Activated T-helper 2 cell treated with anti-CD3 and anti-CD28 coated beads, Interferon-gamma antibody, Interleukin-2, Interleukin-4, amounts not matched to agents 10 μg/mL and 5 μg/mL and 100 μg/mL, durations not matched to agents 14 hours and 24 hours and 36 hours (primary cell): ENCODE measurements at regions of chr4 and their contacts with region 1.

Region 1: DNA sequence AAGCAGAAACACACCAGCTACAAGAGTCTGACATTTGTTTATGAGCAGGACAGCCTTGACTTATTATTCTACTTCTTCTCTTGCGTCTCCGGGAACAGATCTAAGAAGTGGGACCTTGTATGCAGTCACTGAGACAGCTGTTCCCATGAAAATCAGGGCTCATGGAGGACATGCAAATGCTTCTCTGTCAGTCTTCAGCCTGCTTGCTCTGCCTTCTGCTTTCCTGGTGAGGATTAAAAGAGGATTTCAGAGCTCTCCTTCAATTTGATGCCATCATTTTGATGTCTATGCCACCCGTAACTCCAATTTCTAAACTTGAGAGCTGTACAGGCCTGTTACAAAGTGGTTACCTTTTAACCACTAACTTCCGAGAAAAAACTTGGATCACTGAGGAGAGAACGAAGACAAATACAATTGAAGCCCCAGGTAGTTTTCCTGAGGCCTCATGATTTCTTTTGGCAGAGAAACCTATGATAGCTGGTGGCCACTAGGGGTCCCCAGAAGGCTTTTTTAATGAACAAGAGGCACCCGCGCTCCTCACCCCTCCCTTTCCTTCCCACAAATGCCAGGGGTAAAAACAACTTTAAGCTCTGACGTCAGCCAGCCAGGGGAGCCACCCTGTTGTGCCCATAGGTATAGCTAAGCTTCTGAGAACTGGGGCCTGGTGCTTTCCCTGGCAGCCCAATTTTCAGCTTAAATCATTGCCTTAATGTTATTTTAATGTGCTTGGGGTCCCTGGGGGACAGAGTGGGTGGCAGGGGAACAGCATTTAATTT is 97.0 kb downstream of the DDIT4L start:
- DNase-seq: peak; percentile 79
- H3K4me3 Mint-ChIP-seq: no peak overlapping the region
- H3K27ac Mint-ChIP-seq: peak overlapping the region; percentile 84
- H3K4me1 Mint-ChIP-seq: peaks cover 41% of the 10 kb centered on the region
- H3K27me3 Mint-ChIP-seq: no peaks in the 10 kb centered on the region

Region 2: DNA sequence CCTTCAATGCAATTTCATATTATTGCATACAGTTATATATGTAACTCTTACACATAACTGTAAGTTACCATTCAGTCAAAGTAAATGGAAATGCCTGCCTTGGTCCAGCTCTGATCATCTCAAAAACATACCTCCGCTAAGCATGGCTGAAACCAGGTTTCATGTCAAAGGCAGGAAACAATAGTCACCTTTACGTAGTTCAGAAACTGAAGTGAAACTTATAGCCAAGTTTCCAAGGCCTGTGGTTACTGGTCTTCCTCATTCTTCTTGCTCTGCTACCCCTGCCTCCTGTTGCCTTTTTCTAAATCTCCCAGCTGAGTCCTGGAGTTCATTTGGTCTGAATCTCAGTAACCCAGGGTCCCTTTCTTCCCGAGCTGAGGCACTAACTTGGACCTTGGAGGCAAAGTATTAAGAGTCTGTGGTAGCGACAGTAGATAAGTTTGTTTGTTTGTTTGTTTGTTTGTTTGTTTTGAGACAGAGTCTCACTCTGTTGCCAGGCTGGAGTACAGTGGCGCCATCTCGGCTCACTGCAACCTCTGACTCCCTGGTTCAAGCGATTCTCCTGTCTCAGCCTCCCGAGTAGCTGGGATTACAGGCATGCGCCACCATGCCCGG is 245.8 kb before region 1 on chr4:
- intact Hi-C with region 1: loop called (anchors 5 kb)
- DNase-seq: no peak
- H3K4me3 Mint-ChIP-seq: peak overlapping the region; percentile 62
- H3K27ac Mint-ChIP-seq: peak overlapping the region; percentile 91
- H3K4me1 Mint-ChIP-seq: peaks cover 64% of the 10 kb centered on the region
- H3K27me3 Mint-ChIP-seq: no peaks in the 10 kb centered on the region

Region 3: GRCh38 chr4:100106982-100107381 is 13.7 kb after region 1 on chr4:
- intact Hi-C with region 1: loop called (anchors 1 kb)
- DNase-seq: peak; percentile 26
- H3K4me3 Mint-ChIP-seq: no peak overlapping the region
- H3K27ac Mint-ChIP-seq: peak overlapping the region; percentile 53
- H3K4me1 Mint-ChIP-seq: peaks cover 48% of the 10 kb centered on the region
- H3K27me3 Mint-ChIP-seq: no peaks in the 10 kb centered on the region

Region 4: GRCh38 chr4:100391863-100392262 is 298.6 kb after region 1 on chr4:
- intact Hi-C with region 1: loop called (anchors 10 kb)
- DNase-seq: no peak
- H3K4me3 Mint-ChIP-seq: no peak overlapping the region
- H3K27ac Mint-ChIP-seq: no peak overlapping the region
- H3K4me1 Mint-ChIP-seq: peaks cover 2% of the 10 kb centered on the region
- H3K27me3 Mint-ChIP-seq: peaks cover 13% of the 10 kb centered on the region

Region 5: DNA sequence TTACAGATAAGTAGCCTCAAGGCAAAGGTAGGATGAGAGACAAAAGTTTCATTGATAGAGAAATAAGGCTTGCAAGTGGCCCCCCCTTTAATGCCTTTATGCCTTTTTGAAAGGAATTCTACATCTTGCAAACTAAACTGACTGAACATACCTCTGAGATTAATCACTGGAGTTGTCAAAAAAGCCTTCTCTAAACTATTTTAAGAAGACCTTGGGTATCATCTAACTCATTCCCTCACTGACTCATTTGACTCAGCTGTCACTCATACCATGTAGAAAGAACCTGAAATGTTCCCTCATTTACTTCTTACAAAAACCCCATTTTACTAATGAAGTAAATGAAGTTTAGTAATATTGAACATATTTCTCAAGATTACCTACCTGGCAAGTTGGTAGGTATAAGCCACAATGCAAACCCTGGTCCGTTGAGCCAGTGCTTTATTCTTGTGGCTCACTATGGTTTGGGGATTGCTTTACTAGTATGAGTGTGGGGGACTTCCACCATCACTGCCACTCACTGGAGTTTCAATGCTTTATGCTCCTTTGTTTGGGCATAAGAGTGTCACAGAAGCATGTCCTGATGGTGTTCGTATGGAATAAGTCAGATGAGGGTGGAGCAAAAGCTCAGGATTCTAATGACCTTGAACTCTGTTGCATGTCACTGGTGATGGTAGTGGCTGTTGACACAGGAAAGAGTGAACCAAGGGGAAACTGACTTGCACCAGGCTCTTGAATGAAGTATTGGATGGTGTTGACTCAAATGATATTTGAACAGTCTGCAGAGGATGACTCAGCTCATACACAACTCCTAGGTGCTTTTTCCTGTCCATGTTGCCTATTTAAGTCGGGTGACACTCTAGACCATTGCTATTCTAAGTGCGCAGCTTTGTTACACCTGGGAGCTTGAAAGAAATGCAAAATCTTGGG is 730.0 kb after region 1 on chr4:
- intact Hi-C with region 1: loop called (anchors 5 kb)
- DNase-seq: peak; percentile 9
- H3K4me3 Mint-ChIP-seq: no peak overlapping the region
- H3K27ac Mint-ChIP-seq: peak overlapping the region; percentile 76
- H3K4me1 Mint-ChIP-seq: peaks cover 22% of the 10 kb centered on the region
- H3K27me3 Mint-ChIP-seq: no peaks in the 10 kb centered on the region

Region 6: DNA sequence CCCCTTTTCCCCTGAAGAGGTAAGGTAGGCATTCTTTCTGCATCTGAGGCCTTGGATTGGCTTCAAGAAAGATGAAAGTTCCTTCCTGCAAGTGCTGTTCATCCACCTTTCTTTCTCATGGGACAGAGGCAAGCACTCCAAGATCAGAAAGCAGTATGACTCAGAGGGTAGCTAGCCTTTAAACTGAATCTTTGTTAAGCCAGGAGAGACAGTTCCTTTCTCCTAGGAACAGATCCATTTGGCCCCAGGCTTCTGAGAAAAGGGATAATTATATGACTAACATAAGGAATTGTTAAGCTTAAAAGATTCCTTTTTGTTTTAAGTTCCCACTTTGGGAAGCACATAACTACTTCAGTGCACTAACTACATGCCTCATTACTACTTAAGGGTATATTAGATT is 1062.1 kb after region 1 on chr4:
- intact Hi-C with region 1: loop called (anchors 5 kb)
- DNase-seq: no peak
- H3K4me3 Mint-ChIP-seq: no peak overlapping the region
- H3K27ac Mint-ChIP-seq: no peak overlapping the region
- H3K4me1 Mint-ChIP-seq: peaks cover 29% of the 10 kb centered on the region
- H3K27me3 Mint-ChIP-seq: no peaks in the 10 kb centered on the region

Region 7: GRCh38 chr4:101527188-101527587 is 1433.9 kb after region 1 on chr4:
- intact Hi-C with region 1: loop called (anchors 10 kb)
- DNase-seq: peak; percentile 32
- H3K4me3 Mint-ChIP-seq: no peak overlapping the region
- H3K27ac Mint-ChIP-seq: no peak overlapping the region
- H3K4me1 Mint-ChIP-seq: peaks cover 21% of the 10 kb centered on the region
- H3K27me3 Mint-ChIP-seq: peaks cover 36% of the 10 kb centered on the region